ENCODE measurements at regions of chr3 and their contacts with region 1.

Region 1: GRCh38 chr3:80465746-80466145 is 697.9 kb upstream of the ROBO1 start:
- DNase-seq: no peak

Region 2: DNA sequence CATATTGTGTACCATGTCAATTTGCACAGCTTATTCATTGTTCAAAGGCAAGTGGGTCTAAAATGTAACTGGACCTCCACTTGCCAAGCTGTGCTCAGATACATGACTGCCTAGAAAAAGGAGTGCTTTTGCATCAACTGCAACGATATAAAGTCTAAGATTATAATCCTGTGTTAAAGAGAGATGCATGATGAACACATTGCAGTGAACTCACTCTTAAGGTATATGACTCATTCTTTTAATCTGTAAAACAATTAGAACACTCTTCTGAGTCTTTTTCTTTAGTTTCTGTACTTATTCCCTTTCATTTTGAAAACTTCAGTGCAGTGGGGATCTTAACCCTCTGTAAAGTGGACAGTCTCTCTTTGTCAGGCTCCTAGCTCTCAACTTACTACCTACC is 1680.7 kb before region 1 on chr3:
- intact Hi-C with region 1: loop called in 1 of 2 experiments (anchors 10 kb)
- DNase-seq: no peak

Region 3: GRCh38 chr3:80439490-80439889 is 26.3 kb before region 1 on chr3:
- intact Hi-C with region 1: no loop called
- DNase-seq: no peak

Measured in posterior vena cava (tissue), 2 donors.